CD4-positive, alpha-beta T cell (primary cell): ENCODE measurements at regions of chr2 and their contacts with region 1.

Region 1: DNA sequence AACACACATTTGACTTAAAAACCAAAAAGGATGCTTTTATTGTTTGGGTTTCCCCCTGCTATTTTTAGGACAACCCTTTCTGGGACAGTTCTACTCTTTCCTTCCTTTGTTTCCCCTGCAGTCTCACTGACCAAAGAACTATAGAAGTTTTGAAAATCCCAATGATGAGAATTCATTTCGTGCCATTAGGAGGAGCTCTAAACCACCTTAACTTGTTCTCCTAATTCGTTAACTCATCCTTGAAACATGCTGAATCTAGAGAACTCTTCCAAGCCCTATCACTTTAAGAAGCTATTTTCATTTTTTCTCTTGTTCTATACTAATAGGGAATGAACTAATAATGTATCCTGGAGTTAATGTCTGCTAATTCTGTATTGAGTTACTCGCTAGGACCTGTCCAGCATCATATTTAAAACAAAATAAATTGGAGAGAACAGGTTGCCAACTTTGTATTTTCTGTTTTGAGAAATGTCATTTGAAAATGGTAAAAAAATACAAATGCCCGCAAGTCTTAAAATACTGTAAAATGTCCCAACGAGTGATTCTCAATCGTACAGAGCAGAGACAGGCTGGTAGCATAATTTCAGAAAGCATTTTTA is 62.9 kb downstream of the AFTPH start:
- DNase-seq: peak in 3 of 14 experiments; percentile 48 to 71 (median 68)
- ATAC-seq: peak; percentile 72
- H3K4me3 ChIP-seq: no peak overlapping the region
- H3K4me3 Mint-ChIP-seq: no peak overlapping the region
- H3K27ac ChIP-seq: no peak overlapping the region
- H3K27ac Mint-ChIP-seq: no peak overlapping the region
- H3K4me1 ChIP-seq: no peaks in the 10 kb centered on the region
- H3K4me1 Mint-ChIP-seq: no peaks in the 10 kb centered on the region
- H3K27me3 ChIP-seq: no peaks in the 10 kb centered on the region
- H3K27me3 Mint-ChIP-seq: no peaks in the 10 kb centered on the region
- CTCF ChIP-seq: peak; percentile 67

Region 2: GRCh38 chr2:64666810-64667438 is 79.9 kb after region 1 on chr2:
- CTCF ChIA-PET with region 1: no interaction called
- POLR2A ChIA-PET with region 1: no interaction called
- intact Hi-C with region 1: no loop called
- DNase-seq: peak in 1 of 14 experiments; percentile 40
- ATAC-seq: peak; percentile 73
- H3K4me3 ChIP-seq: no peak overlapping the region
- H3K4me3 Mint-ChIP-seq: peak overlapping the region; percentile 60
- H3K27ac ChIP-seq: peak overlapping the region; percentile 43 to 51
- H3K27ac Mint-ChIP-seq: no peak overlapping the region
- H3K4me1 ChIP-seq: peaks cover 37% of the 10 kb centered on the region
- H3K4me1 Mint-ChIP-seq: peaks cover 32% of the 10 kb centered on the region
- H3K27me3 ChIP-seq: no peaks in the 10 kb centered on the region
- H3K27me3 Mint-ChIP-seq: no peaks in the 10 kb centered on the region
- CTCF ChIP-seq: no peak

Region 3: DNA sequence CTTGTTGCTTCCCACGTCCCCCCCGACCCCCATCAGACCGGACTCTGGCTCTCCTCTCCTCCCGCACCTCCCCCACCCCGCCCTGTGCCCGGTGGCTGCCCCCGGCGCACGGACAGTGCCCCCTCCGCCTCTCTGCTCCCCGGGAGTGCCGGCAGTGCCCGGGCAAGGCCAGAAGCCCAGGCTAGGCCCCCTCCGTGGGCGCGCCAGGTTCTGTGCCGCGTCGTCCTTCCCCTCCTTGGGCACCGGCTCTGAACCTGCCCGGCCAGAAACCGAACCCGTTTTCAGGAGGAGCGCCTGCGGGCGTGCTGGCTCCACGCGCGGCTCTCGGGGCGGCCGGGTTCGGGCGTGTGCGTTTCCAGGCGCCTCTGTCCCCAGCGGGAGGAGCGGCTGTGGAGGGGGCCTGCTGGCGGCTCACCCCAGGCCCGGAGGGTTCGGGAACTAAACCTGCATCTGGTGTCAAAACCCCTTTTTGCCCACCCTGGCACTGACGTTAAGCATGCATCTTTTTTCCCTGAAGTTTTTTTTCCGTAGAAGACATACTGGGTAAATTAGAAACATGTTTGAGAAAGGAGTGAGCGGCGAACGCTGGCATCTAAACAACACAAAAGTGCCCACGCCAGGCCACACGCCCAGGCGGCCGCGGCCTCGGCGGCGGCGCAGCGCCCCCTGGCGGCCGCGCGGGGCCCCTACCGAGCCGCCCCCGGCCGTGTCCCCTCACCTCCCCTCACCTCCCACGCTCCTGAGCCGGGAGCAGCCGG is 278.3 kb after region 1 on chr2:
- CTCF ChIA-PET with region 1: interaction called, 8 read pairs
- POLR2A ChIA-PET with region 1: interaction called, 3 read pairs
- intact Hi-C with region 1: loop called (anchors 1 kb)
- DNase-seq: peak; percentile 32 to 85 (median 58)
- ATAC-seq: peak; percentile 94
- H3K4me3 ChIP-seq: peak overlapping the region; percentile 62
- H3K4me3 Mint-ChIP-seq: peak overlapping the region; percentile 78
- H3K27ac ChIP-seq: no peak overlapping the region
- H3K27ac Mint-ChIP-seq: no peak overlapping the region
- H3K4me1 ChIP-seq: peaks cover 18% of the 10 kb centered on the region
- H3K4me1 Mint-ChIP-seq: no peaks in the 10 kb centered on the region
- H3K27me3 ChIP-seq: peaks cover 0 to 3% of the 10 kb centered on the region in 2 experiments
- H3K27me3 Mint-ChIP-seq: peaks cover 5% of the 10 kb centered on the region
- CTCF ChIP-seq: no peak

Region 4: DNA sequence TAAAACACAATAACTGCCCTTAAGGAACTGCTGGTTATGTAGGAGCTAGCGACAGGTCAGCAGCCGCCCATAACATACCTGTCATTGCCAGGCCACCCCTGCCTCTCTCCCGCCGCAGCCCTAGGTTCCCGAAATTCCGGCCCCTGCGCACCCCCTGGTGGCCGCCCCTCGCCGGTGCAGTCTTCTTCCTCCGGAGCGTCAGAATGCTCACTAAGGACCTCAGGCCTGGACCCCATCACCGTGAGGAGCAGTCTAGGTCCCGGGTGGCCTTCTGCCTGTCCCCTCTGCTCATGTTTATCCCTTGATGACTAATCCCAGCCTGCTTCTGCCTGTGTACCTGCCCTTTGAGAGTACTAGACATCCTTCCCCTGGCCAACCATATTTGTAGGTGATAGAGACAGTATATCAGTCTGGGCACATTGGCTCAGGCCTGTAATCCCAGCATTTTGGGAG is 286.5 kb after region 1 on chr2:
- CTCF ChIA-PET with region 1: interaction called, 4 read pairs
- POLR2A ChIA-PET with region 1: no interaction called
- intact Hi-C with region 1: loop called in 1 of 2 experiments (anchors 1 kb)
- DNase-seq: peak; percentile 53 to 86 (median 74)
- ATAC-seq: peak; percentile 98
- H3K4me3 ChIP-seq: peak overlapping the region; percentile 24
- H3K4me3 Mint-ChIP-seq: peak overlapping the region; percentile 4
- H3K27ac ChIP-seq: no peak overlapping the region
- H3K27ac Mint-ChIP-seq: no peak overlapping the region
- H3K4me1 ChIP-seq: peaks cover 9% of the 10 kb centered on the region
- H3K4me1 Mint-ChIP-seq: peaks cover 7% of the 10 kb centered on the region
- H3K27me3 ChIP-seq: no peaks in the 10 kb centered on the region
- H3K27me3 Mint-ChIP-seq: no peaks in the 10 kb centered on the region
- CTCF ChIP-seq: peak; percentile 96